OCI-LY7 (cell line): ENCODE measurements at regions of chr5 and their contacts with region 1.

Region 1: DNA sequence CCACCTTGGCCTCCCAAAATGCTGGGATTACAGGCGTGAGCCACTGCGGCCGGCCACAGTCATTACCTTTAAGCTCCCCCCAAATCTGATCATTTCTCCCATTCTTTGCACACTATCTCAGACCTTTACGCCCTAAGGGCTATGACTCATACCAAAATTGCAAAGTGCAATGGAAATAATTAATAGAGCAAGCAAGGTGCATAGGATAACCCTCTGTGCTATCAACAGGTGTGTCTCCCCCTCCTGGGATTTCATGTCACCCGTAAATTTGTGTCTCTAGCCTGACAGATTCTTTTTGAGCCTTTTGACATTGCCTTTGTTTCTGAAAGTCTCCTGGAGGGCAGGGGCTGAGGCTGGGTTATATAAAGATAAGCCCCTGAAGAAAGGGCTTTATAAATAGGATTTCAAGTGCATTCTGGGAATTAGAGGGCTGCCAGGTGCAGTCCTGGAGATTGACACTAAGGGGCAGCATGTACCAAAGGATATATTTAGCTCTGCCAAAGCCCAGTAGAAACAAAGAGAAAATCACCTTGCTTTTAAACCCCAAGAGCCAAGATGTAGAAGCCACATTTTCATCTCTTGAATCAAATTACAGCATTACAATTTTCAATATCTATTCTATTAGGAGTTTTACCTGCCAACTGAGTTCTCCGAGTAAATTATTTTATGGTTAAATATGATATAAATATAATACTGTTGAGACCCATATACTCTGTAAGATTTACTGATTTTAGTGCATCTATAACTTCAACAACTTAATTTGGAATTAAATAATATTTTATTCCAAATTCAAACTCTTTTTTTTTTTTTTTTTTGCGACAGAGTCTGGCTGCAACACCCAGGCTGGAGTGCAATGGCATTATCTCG is 18.2 kb downstream of the S100Z start:
- DNase-seq: peak; percentile 85
- H3K4me3 ChIP-seq: no peak overlapping the region
- H3K27ac ChIP-seq: no peak overlapping the region
- H3K4me1 ChIP-seq: peaks cover 44% of the 10 kb centered on the region
- CTCF ChIP-seq: peak; percentile 96

Region 2: GRCh38 chr5:76688836-76689235 is 179.2 kb before region 1 on chr5:
- CTCF ChIA-PET with region 1: no interaction called
- POLR2A ChIA-PET with region 1: no interaction called
- intact Hi-C with region 1: no loop called
- DNase-seq: no peak
- H3K4me3 ChIP-seq: no peak overlapping the region
- H3K27ac ChIP-seq: no peak overlapping the region
- H3K4me1 ChIP-seq: no peaks in the 10 kb centered on the region
- CTCF ChIP-seq: no peak

Region 3: GRCh38 chr5:77015938-77016569 is 148.0 kb after region 1 on chr5:
- CTCF ChIA-PET with region 1: interaction called, 4 read pairs
- POLR2A ChIA-PET with region 1: interaction called, 4 read pairs
- intact Hi-C with region 1: loop called (anchors 1 kb)
- DNase-seq: peak; percentile 77
- H3K4me3 ChIP-seq: no peak overlapping the region
- H3K27ac ChIP-seq: no peak overlapping the region
- H3K4me1 ChIP-seq: peaks cover 4% of the 10 kb centered on the region
- CTCF ChIP-seq: peak; percentile 81

Region 4: DNA sequence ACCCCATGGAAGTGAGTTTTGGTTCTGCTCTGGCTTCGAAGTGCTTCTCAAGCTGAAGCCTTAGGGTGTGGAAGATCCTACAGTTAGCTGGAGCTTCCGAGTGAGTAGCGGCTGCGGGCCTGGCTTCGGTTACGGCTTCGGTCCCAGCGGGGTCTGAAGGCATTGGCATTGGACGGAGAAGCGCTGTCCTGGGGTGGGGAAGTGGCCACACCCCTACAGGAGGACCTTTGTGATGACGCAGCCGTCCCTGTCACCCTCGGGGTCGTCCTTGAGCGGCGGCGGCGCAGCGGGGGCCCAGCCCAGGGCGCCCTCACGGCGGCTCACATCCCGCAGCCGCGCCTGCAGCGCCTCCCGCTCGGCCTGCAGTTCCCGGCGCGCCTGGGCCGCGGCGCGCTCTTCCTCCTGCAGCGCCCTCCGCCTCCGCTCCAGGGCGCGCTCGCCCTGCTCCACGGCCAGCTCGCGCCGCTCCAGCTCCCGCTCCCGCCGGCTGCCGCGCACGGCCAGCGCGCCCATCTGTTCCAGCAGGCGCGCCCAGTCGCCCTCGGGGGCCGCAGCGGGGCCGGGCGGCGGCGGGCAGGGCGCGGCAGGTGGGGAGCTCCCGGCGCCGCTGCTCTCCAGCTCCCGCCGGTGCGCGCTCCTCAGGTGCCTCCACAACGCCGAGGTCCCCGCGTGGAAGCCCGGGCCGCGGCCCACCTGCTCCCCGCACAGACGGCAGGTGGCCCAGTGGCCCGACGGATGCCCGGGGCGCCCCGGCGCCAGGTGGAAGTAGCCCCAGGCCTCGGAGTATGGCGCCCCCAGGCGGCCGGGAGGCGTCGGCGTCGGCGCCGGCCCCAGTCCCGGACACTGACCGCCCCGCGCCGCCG is 209.1 kb after region 1 on chr5:
- CTCF ChIA-PET with region 1: no interaction called
- POLR2A ChIA-PET with region 1: no interaction called
- intact Hi-C with region 1: loop called (anchors 1 kb)
- DNase-seq: peak; percentile 40
- H3K4me3 ChIP-seq: peak overlapping the region; percentile 53
- H3K27ac ChIP-seq: no peak overlapping the region
- H3K4me1 ChIP-seq: no peaks in the 10 kb centered on the region
- CTCF ChIP-seq: peak; percentile 67

Region 5: GRCh38 chr5:77143998-77144836 is 276.2 kb after region 1 on chr5:
- CTCF ChIA-PET with region 1: no interaction called
- POLR2A ChIA-PET with region 1: interaction called, 4 read pairs
- intact Hi-C with region 1: loop called (anchors 2 kb)
- DNase-seq: peak; percentile 66
- H3K4me3 ChIP-seq: no peak overlapping the region
- H3K27ac ChIP-seq: no peak overlapping the region
- H3K4me1 ChIP-seq: no peaks in the 10 kb centered on the region
- CTCF ChIP-seq: peak; percentile 93

Region 6: DNA sequence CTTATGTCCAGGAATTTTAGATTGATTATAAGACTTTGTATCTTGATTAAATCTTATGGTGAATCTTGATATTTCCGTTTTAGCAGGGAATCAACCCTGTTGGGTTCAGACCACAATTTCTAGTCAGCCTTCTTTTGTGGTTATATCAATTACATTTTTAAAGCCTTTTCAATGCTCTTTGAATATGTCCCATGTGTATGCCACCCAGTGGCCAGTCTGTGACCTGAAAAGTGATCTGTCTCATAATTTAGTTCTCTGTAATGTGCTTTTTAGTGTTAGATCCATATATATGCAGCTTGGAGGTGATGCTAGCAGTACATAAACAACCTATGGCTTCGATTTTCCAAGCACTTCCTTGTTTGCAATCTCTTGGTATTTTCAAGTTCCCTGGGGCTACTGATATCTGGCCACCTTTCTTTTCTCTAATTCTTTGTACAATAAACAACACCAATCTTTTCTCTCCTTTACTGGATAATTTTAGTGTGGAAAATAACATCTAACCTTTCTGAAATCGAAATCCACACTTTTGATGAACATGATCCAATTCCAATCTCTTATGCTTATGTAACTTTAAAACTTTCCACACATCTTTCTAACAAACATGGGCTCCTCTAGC is 371.2 kb after region 1 on chr5:
- CTCF ChIA-PET with region 1: no interaction called
- POLR2A ChIA-PET with region 1: no interaction called
- intact Hi-C with region 1: loop called (anchors 1 kb)
- DNase-seq: peak; percentile 31
- H3K4me3 ChIP-seq: no peak overlapping the region
- H3K27ac ChIP-seq: no peak overlapping the region
- H3K4me1 ChIP-seq: no peaks in the 10 kb centered on the region
- CTCF ChIP-seq: peak; percentile 75

Region 7: GRCh38 chr5:77491783-77492652 is 624.0 kb after region 1 on chr5 and contains the start of gene WDR41:
- CTCF ChIA-PET with region 1: interaction called, 3 read pairs
- POLR2A ChIA-PET with region 1: interaction called, 3 read pairs
- intact Hi-C with region 1: loop called (anchors 1 kb)
- DNase-seq: peak; percentile 92
- H3K4me3 ChIP-seq: peak within 1 kb of the TSS; percentile 92
- H3K27ac ChIP-seq: peak within 1 kb of the TSS; percentile 87
- H3K4me1 ChIP-seq: peaks cover 20% of the 10 kb centered on the region
- CTCF ChIP-seq: peak; percentile 83
- total RNA-seq, gene WDR41: 47.0 and 75.1 TPM in 2 replicates